Body of pancreas (tissue), 4 donors: ENCODE measurements at regions of chr19 and their contacts with region 1.

Region 1: DNA sequence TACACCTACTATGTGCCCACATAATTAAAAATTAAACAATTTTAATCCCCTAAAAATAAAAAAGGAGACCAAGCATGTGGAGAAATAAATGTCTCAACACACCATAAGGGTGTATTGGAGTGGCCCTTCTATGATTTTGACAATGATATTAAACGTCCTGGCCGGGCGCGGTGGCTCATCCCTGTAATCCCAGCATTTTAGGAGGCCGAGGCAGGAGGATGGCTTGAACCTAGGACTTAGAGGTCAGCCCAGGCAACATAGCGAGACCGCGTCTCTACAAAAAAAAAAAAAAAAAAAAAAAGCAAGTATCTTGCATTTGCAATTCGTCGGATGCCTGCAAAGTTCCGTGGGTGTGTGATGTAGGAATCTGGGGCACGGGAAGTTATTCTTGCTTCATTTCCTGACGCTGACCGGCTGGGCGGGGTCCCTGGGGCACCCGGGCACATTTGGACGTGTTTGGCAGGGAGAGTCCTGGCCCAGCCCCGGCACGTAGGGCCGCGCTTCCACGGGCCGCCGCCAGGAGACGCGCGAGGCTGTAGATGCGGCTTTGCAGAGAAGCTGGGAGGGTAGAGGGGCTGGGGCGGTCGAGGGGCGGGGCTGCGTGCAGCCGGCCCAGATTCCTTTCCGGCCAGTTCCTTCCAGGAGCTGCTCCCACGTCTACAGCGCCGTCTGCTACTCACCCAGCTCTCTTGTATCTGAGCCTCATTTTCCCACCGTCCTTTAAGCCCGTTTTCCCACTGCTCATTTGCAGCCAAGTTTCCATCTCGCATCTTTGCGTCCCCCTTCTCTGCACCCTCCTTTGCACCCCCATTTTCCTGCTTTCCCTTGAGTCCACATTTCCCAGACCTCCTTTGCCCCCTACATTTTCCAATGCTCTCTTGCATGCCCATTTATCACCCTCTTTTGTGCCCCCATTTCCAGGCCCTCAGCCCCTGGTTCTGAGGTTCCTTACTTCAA is 2.2 kb upstream of the TSPAN16 start:
- DNase-seq: peak; percentile 92 to 96 (median 94)
- ATAC-seq: peak; percentile 99
- H3K4me3 ChIP-seq: no peak overlapping the region
- H3K27ac ChIP-seq: peak overlapping the region in 2 of 4 donors; percentile 20 to 65
- H3K4me1 ChIP-seq: peaks cover 10% of the 10 kb centered on the region
- H3K27me3 ChIP-seq: no peaks in the 10 kb centered on the region
- CTCF ChIP-seq: peak; percentile 96 to 99 (median 98)
- POLR2A ChIP-seq: no peak

Region 2: DNA sequence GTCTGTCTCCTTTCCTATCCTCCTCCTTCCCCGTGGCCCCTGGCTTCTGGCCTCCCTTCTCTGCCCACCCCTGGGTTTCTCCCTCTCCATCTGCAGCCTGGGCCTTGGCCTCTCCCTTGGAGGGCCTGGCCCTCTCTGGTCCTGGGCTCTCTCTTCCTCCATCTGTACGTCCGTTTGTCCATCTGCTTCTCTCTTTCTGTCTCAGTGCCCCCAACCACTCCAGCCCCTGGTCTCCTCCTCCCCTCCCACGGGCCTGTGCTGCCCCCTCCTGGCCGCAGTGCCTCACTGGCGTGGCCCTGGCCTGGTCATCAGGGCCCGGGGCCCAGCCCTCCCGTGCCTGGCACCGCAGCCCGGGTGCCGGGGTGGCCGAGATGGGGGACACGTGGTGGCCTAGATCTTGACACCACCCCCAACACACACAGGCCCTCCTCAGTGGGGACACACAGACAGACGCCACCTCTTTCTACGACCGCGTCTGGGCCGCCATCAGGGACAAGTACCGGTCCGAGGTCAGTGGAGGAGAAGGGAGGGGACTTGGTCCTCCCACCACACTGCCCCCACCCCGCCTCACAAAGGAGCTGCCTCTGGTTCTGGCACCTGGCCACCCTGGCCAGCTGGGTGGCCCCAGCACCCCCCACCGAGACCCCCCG is 153.1 kb after region 1 on chr19:
- intact Hi-C with region 1: loop called (anchors 5 kb)
- DNase-seq: peak; percentile 37 to 65 (median 51)
- ATAC-seq: peak; percentile 61
- H3K4me3 ChIP-seq: no peak overlapping the region
- H3K27ac ChIP-seq: no peak overlapping the region
- H3K4me1 ChIP-seq: no peaks in the 10 kb centered on the region
- H3K27me3 ChIP-seq: no peaks in the 10 kb centered on the region
- CTCF ChIP-seq: peak; percentile 64 to 91 (median 80)
- POLR2A ChIP-seq: no peak

Region 3: GRCh38 chr19:11482384-11483050 is 188.8 kb after region 1 on chr19:
- intact Hi-C with region 1: loop called (anchors 10 kb)
- DNase-seq: peak; percentile 73 to 82 (median 79)
- ATAC-seq: peak; percentile 71
- H3K4me3 ChIP-seq: no peak overlapping the region
- H3K27ac ChIP-seq: no peak overlapping the region
- H3K4me1 ChIP-seq: peaks cover 30% of the 10 kb centered on the region
- H3K27me3 ChIP-seq: peaks cover 0 to 35% of the 10 kb centered on the region in 2 donors
- CTCF ChIP-seq: peak; percentile 82 to 96 (median 93)
- POLR2A ChIP-seq: peak in 1 of 3 donors; percentile 14

Region 4: DNA sequence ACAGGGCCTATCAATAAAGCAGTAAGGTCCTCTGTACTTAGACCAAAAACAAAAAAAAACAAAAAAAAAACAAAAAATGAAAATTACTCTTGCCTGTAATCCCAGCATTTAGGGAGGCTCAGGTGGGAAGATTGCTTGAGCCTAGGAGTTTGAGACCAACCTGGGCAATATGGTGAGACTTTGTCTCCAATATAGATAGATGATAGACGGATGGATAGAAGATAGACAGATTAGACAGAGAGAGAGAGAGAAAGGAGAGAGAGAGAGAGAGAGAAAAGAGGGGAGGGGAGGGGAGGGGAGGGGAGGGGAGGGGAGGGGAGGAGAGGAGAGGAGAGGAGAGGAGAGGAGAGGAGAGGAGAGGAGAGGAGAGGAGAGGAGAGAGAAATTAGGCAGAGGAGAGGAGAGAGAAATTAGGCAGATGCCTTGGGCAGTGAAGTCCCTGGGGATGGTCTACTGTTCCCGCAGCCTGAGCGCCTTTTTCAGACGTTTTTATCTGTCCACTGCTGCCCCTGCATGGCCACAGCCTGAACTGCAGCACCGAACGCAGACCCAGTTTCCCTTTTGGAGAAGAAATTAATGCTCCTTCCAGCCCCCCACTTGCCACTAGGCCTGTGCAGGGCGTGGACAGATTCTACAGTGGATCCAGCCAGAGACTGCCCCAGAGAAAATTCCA is 293.7 kb after region 1 on chr19:
- intact Hi-C with region 1: loop called (anchors 10 kb)
- DNase-seq: peak; percentile 78 to 85 (median 84)
- ATAC-seq: peak; percentile 99
- H3K4me3 ChIP-seq: no peak overlapping the region
- H3K27ac ChIP-seq: peak overlapping the region in 1 of 4 donors; percentile 9
- H3K4me1 ChIP-seq: peaks cover 9% of the 10 kb centered on the region
- H3K27me3 ChIP-seq: no peaks in the 10 kb centered on the region
- CTCF ChIP-seq: peak; percentile 76 to 96 (median 91)
- POLR2A ChIP-seq: no peak